ENCODE measurements at regions of chr17 and their contacts with region 1.

Region 1: GRCh38 chr17:80008383-80008840 is 27.3 kb downstream of the TBC1D16 start:
- DNase-seq: peak; percentile 54
- H3K4me3 ChIP-seq: no peak overlapping the region
- H3K27ac ChIP-seq: no peak overlapping the region
- H3K4me1 ChIP-seq: no peaks in the 10 kb centered on the region
- H3K27me3 ChIP-seq: no peaks in the 10 kb centered on the region
- CTCF ChIP-seq: peak; percentile 97 to 99
- POLR2A ChIP-seq: no peak

Region 2: DNA sequence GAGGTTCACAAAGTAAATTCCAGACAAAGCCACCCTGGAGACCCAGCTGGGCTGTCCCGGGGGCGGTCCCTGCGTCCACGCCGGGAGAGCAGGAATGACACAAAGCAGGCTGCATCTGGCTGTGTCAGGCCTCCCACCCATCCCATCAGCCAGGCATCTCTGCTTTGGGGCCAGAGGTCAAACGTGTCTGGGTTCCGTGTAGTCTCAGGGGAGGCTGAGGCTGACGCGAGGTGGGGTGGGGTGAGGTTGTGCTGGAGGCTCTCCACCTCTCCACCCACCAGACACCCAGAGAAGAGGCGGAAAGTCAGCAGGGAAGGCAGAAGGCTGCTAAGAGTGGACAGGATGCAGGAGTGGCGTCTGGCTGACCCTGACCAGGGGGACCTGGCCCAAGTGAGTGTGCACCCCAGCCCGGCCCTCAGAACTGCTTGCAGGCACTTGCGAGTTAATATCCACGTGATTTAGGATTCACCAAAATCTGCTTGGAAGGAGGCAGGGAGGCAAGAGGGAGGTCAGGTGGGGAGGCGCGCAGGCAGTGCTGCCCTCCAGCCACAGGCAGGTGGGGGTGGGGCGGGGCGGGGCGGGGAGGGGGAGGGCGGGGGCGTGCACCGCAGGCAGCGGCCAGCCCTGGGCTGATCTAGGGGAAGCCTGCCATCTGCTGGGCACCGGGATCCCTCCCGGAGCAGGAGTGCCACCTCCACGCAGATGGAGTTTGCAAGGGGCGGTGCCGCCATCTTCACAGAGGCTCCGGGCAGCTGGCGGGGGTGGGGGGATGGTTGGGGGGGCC is 17.1 kb before region 1 on chr17:
- CTCF ChIA-PET with region 1: interaction called, 11 read pairs
- POLR2A ChIA-PET with region 1: no interaction called
- dilution Hi-C with region 1: no loop called
- intact Hi-C with region 1: no loop called
- DNase-seq: peak; percentile 70
- H3K4me3 ChIP-seq: peak overlapping the region in 1 of 3 experiments; percentile 14
- H3K27ac ChIP-seq: no peak overlapping the region
- H3K4me1 ChIP-seq: peaks cover 20% of the 10 kb centered on the region
- H3K27me3 ChIP-seq: no peaks in the 10 kb centered on the region
- CTCF ChIP-seq: peak; percentile 24 to 79
- POLR2A ChIP-seq: no peak

Region 3: GRCh38 chr17:80029258-80029974 is 21.0 kb after region 1 on chr17:
- CTCF ChIA-PET with region 1: interaction called, 23 read pairs
- POLR2A ChIA-PET with region 1: no interaction called
- dilution Hi-C with region 1: no loop called
- intact Hi-C with region 1: no loop called
- DNase-seq: peak; percentile 51
- H3K4me3 ChIP-seq: no peak overlapping the region
- H3K27ac ChIP-seq: no peak overlapping the region
- H3K4me1 ChIP-seq: peaks cover 12% of the 10 kb centered on the region
- H3K27me3 ChIP-seq: no peaks in the 10 kb centered on the region
- CTCF ChIP-seq: no peak
- POLR2A ChIP-seq: no peak

Region 4: DNA sequence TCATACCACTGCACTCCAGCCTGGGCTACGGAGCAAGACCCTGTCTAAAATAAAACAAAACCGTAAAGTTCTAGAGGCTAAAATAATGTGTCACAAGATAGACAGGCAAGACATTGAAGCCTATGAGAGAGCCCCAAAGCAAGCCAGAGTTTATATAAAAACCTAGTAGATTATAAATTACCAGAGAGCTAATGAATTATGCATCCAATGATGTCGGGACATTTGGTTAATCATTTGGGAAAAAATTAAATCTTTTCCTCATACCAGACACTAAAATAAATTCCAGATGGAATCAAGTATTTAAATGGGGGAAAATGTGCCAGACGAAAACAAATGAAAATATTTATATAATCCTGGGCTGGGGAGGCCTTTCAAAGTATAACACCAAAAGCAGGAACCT is 52.2 kb after region 1 on chr17:
- CTCF ChIA-PET with region 1: interaction called, 10 read pairs
- POLR2A ChIA-PET with region 1: no interaction called
- dilution Hi-C with region 1: no loop called
- intact Hi-C with region 1: no loop called
- DNase-seq: no peak
- H3K4me3 ChIP-seq: no peak overlapping the region
- H3K27ac ChIP-seq: no peak overlapping the region
- H3K4me1 ChIP-seq: no peaks in the 10 kb centered on the region
- H3K27me3 ChIP-seq: no peaks in the 10 kb centered on the region
- CTCF ChIP-seq: no peak
- POLR2A ChIP-seq: no peak

Region 5: DNA sequence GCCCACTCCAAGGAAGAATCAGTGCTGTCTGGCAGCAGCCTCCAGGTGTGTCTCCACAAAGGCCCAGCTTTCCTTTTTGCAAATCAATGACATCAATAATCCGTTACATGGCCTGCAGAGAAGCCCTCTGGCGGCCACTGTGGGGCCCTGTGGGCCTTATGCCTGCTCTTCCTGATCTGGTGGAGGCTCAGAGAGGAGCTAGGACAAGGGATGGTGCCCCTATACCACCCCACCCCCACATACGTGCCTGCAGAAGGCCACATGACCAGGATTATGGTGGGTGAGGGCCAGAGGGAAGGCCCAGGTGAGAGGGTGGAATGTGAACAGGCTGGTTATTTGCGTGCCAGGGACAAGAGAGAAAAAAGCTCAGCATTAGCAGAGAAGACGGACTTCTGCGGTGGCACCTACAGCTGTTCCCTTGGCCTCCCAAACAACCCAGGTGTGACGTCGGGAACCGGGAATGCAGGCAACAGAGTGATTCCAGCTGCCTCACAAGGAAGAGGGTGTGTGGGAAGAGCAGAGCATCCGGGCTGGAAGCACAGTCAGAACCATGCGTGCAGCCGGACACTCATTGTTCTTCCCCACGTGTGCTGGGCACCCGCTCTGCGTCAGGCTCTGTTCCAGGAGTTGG is 116.1 kb after region 1 on chr17:
- CTCF ChIA-PET with region 1: interaction called, 70 read pairs
- POLR2A ChIA-PET with region 1: no interaction called
- dilution Hi-C with region 1: no loop called
- intact Hi-C with region 1: loop called (anchors 5 kb)
- DNase-seq: peak; percentile 23
- H3K4me3 ChIP-seq: no peak overlapping the region
- H3K27ac ChIP-seq: no peak overlapping the region
- H3K4me1 ChIP-seq: no peaks in the 10 kb centered on the region
- H3K27me3 ChIP-seq: peaks cover 18 to 19% of the 10 kb centered on the region in 2 experiments
- CTCF ChIP-seq: peak; percentile 25 to 66
- POLR2A ChIP-seq: no peak

Measured in endothelial cell of umbilical vein (primary cell).